ENCODE measurements at regions of chr3 and their contacts with region 1.

Region 1: GRCh38 chr3:15405448-15406050 is 21.8 kb downstream of the METTL6 start:
- DNase-seq: peak; percentile 59
- H3K4me3 Mint-ChIP-seq: no peak overlapping the region
- H3K27ac Mint-ChIP-seq: no peak overlapping the region
- H3K4me1 Mint-ChIP-seq: no peaks in the 10 kb centered on the region
- H3K27me3 Mint-ChIP-seq: no peaks in the 10 kb centered on the region
- CTCF ChIP-seq: peak; percentile 57

Region 2: DNA sequence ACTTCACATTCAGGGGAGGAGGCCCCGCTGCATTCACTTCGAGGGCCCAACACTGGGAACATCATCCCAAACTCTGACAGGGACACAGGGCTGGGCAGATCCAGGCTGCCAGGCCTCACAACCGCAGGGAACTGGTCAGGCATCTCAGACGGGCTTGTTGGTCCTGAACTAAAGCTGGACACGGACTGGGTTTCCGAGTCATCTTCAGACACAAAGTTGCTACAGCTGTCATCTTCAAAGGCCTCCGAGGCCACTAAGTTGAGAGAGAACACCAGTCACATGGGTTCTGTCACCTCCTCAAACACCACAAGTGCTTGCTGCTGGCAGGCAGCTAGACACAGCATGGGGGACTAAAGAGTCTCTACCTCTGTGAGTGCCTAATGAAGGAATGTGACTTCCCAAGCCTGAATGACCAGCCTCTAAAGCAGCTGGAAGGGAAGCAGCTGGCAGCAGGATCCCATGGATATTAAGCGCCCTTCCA is 148.6 kb before region 1 on chr3:
- CTCF ChIA-PET with region 1: interaction called, 10 read pairs
- POLR2A ChIA-PET with region 1: interaction called, 3 read pairs
- intact Hi-C with region 1: no loop called
- DNase-seq: no peak
- H3K4me3 Mint-ChIP-seq: no peak overlapping the region
- H3K27ac Mint-ChIP-seq: no peak overlapping the region
- H3K4me1 Mint-ChIP-seq: peaks cover 15% of the 10 kb centered on the region
- H3K27me3 Mint-ChIP-seq: no peaks in the 10 kb centered on the region
- CTCF ChIP-seq: no peak

Region 3: DNA sequence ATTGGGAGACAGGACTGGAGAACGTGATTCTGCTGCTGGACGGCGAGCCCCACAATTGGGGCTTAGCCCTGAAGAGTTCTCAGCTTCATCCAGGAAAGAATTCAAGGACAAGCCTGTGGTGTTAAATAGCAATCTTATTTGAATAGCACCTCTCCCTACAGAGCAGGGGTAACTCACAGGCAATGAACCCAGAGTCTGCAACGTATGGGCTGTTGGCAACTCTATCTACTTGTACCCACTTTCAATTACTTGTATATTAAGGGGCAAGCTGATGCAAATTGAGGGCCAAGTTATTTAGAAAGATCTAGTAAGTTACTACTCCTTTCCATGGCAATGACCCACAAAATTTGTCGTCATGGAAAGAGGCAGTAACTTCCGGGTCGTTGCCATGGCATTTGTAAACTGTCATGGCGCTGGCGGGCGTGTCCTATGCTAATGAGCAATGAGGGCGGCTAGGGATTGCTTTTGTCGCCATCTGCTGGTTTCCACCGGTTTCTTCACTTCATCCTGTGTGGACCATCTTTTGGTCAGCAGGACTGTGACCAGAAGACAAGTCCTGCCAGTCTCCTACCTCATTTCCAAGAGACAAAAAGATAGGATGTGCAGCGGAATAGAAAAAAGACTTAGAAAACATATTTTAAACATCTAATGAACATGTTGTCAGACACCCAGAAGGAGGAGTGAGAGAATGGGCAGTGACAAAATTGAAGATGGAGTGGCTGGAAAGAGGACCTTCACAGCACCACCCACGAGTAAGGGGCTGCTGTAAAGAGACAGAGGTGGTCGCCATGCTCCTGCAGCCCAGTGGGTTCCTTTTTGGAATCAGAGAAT is 27.4 kb before region 1 on chr3:
- CTCF ChIA-PET with region 1: interaction called, 10 read pairs
- POLR2A ChIA-PET with region 1: interaction called, 3 read pairs
- intact Hi-C with region 1: no loop called
- DNase-seq: peak; percentile 96
- H3K4me3 Mint-ChIP-seq: no peak overlapping the region
- H3K27ac Mint-ChIP-seq: no peak overlapping the region
- H3K4me1 Mint-ChIP-seq: no peaks in the 10 kb centered on the region
- H3K27me3 Mint-ChIP-seq: no peaks in the 10 kb centered on the region
- CTCF ChIP-seq: peak; percentile 86

Region 4: DNA sequence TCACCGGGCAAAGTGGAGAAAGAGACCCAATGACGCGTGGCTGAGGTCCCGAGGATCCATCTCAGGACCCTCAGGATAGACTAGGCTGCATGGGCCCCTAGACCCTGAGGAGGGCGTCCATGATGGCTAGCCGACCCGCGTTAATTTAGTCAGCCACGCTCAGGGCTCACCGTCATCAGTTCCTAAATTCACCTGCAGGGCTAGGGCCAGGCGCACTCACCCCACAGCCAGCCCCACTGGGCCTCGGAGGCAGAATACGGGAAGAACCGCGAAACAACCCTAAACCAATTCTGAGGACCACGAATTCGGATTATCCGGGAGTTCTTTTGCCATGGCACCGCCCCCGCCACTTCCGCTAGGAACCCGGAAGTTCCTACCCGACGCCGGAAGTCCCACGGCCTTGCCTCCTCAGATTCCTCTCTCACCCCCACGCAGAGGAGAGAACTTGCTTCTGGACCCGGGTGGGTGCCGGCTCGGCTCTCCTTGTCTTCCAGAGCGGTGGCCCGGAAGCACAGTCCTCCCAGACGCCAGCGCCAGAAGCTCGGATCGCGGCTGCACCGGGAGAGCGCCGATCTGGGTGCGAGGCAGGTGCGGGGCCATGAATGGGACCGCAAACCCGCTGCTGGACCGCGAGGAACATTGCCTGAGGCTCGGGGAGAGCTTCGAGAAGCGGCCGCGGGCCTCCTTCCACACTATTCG is 21.8 kb after region 1 on chr3 and contains the starts of genes EAF1 and METTL6:
- CTCF ChIA-PET with region 1: interaction called, 12 read pairs
- POLR2A ChIA-PET with region 1: no interaction called
- intact Hi-C with region 1: no loop called
- DNase-seq: peak; percentile 76
- H3K4me3 Mint-ChIP-seq: peak within 1 kb of the TSS; percentile 91
- H3K27ac Mint-ChIP-seq: peak within 1 kb of the TSS; percentile 98
- H3K4me1 Mint-ChIP-seq: peaks cover 25% of the 10 kb centered on the region
- H3K27me3 Mint-ChIP-seq: no peaks in the 10 kb centered on the region
- CTCF ChIP-seq: no peak
- total RNA-seq, gene EAF1: 28.3 and 29.8 TPM in 2 replicates
- total RNA-seq, gene METTL6: 26.7 and 28.1 TPM in 2 replicates

Measured in MCF 10A (cell line).